Right ventricle myocardium superior (tissue), 1 donor: ENCODE measurements at regions of chr10 and their contacts with region 1.

Region 1: DNA sequence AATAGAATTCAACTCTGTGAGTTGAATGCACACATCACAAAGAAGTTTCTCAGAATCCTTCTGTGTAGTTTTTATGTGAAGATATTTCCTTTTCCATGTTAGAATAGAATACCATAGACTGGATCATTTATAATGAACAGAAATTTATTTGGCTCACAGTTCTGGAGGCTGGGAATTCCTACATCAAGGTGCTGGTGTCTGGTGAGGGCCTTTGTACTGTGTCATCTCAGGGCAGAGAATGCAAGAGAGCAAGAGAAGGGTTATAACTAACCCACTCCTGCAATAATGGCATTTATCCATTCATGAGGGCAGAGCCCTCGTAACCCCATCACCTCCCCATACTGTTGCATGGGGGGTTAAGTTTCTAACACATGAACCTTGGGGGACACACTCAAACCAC is 18.4 kb upstream of the DIP2C start:
- DNase-seq: no peak
- ATAC-seq: no peak

Region 2: GRCh38 chr10:338518-339311 is 369.1 kb before region 1 on chr10:
- intact Hi-C with region 1: loop called (anchors 5 kb)
- DNase-seq: no peak
- ATAC-seq: no peak

Region 3: GRCh38 chr10:470338-470999 is 237.4 kb before region 1 on chr10:
- intact Hi-C with region 1: no loop called
- DNase-seq: no peak
- ATAC-seq: no peak

Region 4: GRCh38 chr10:775245-776075 is 67.6 kb after region 1 on chr10:
- intact Hi-C with region 1: loop called (anchors 10 kb)
- DNase-seq: no peak
- ATAC-seq: no peak

Region 5: GRCh38 chr10:1010703-1011102 is 302.8 kb after region 1 on chr10:
- intact Hi-C with region 1: no loop called
- DNase-seq: no peak
- ATAC-seq: no peak